ENCODE measurements at regions of chr11 and their contacts with region 1.

Region 1: GRCh38 chr11:120108154-120108865 is 29.6 kb downstream of the TRIM29 start:
- DNase-seq: peak; percentile 66
- H3K4me3 Mint-ChIP-seq: no peak overlapping the region
- H3K27ac Mint-ChIP-seq: no peak overlapping the region
- H3K4me1 Mint-ChIP-seq: no peaks in the 10 kb centered on the region
- H3K27me3 Mint-ChIP-seq: peaks cover 32% of the 10 kb centered on the region
- CTCF ChIP-seq: peak; percentile 99

Region 2: GRCh38 chr11:119618208-119618909 is 490.0 kb before region 1 on chr11:
- CTCF ChIA-PET with region 1: interaction called, 10 read pairs
- POLR2A ChIA-PET with region 1: interaction called, 3 read pairs
- intact Hi-C with region 1: no loop called
- DNase-seq: no peak
- H3K4me3 Mint-ChIP-seq: no peak overlapping the region
- H3K27ac Mint-ChIP-seq: no peak overlapping the region
- H3K4me1 Mint-ChIP-seq: peaks cover under 1% of the 10 kb centered on the region
- H3K27me3 Mint-ChIP-seq: no peaks in the 10 kb centered on the region
- CTCF ChIP-seq: no peak

Region 3: GRCh38 chr11:119728651-119729580 is 379.4 kb before region 1 on chr11 and contains the start of gene NECTIN1:
- CTCF ChIA-PET with region 1: interaction called, 39 read pairs
- POLR2A ChIA-PET with region 1: interaction called, 15 read pairs
- intact Hi-C with region 1: loop called (anchors 10 kb)
- DNase-seq: peak; percentile 83
- H3K4me3 Mint-ChIP-seq: peak within 1 kb of the TSS; percentile 81
- H3K27ac Mint-ChIP-seq: peak within 1 kb of the TSS; percentile 69
- H3K4me1 Mint-ChIP-seq: peaks cover 16% of the 10 kb centered on the region
- H3K27me3 Mint-ChIP-seq: no peaks in the 10 kb centered on the region
- CTCF ChIP-seq: peak; percentile 96
- total RNA-seq, gene NECTIN1: 59.2 and 78.6 TPM in 2 replicates

Region 4: DNA sequence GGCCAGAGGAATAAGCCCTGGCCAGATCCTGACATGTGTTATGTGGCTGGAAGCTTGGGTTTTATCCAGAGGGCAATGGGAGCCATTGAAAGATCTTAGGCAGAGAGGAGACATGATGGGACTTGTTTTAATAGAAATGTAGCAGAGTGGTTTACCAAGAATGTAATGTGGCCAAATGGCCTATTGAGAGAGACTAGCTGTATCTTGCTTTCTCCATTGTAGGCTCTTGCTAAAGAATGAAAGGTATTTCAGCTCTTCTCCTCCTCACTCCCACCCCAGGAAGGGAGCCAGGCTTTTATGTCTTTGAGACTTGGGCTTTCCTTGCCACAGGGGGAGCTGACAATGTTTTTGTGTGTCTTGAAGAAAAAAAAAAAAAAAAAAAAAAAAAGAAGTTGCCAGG is 52.7 kb before region 1 on chr11:
- CTCF ChIA-PET with region 1: interaction called, 11 read pairs
- POLR2A ChIA-PET with region 1: interaction called, 3 read pairs
- intact Hi-C with region 1: no loop called
- DNase-seq: peak; percentile 67
- H3K4me3 Mint-ChIP-seq: no peak overlapping the region
- H3K27ac Mint-ChIP-seq: peak overlapping the region; percentile 60
- H3K4me1 Mint-ChIP-seq: peaks cover 12% of the 10 kb centered on the region
- H3K27me3 Mint-ChIP-seq: no peaks in the 10 kb centered on the region
- CTCF ChIP-seq: no peak

Region 5: DNA sequence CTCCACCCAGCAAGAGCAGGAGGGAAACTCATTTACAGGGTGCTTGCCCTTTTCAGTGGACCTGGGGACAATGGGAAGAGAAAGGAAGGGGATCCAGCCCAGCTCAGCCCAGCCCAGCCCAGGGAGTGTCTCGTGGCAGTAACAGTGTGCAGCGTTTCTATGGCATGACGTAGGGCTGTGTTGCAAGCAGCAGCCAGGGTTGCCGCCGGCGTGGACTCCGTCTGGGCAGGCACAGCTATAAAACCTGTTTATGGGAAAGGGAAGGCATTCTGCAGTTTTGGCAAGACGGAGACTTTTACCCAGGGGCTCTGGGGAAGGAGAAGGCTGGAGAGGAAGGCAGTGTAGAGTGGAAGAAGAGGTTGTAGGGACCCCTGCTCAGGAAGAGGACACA is 20.5 kb after region 1 on chr11:
- CTCF ChIA-PET with region 1: interaction called, 4 read pairs
- POLR2A ChIA-PET with region 1: interaction called, 10 read pairs
- intact Hi-C with region 1: no loop called
- DNase-seq: peak; percentile 91
- H3K4me3 Mint-ChIP-seq: peak overlapping the region; percentile 53
- H3K27ac Mint-ChIP-seq: peak overlapping the region; percentile 90
- H3K4me1 Mint-ChIP-seq: peaks cover 80% of the 10 kb centered on the region
- H3K27me3 Mint-ChIP-seq: no peaks in the 10 kb centered on the region
- CTCF ChIP-seq: no peak